GM12878 (cell line): ENCODE measurements at regions of chr17 and their contacts with region 1.

Region 1: GRCh38 chr17:67456103-67456502 is 79.0 kb downstream of the PITPNC1 start:
- DNase-seq: no peak
- ATAC-seq: peak; percentile 63
- H3K4me3 ChIP-seq: peak overlapping the region; percentile 4; the same call in 1 of the 2 replicates
- H3K27ac ChIP-seq: peak overlapping the region; percentile 35; the same call in 1 of the 2 replicates
- H3K4me1 ChIP-seq: peaks cover 34% of the 10 kb centered on the region
- H3K27me3 ChIP-seq: no peaks in the 10 kb centered on the region
- CTCF ChIP-seq: no peak
- EP300 ChIP-seq: no peak
- POLR2A ChIP-seq: no peak
- RAD21 ChIP-seq: no peak

Region 2: GRCh38 chr17:66567234-66568170 is 888.6 kb before region 1 on chr17:
- CTCF ChIA-PET with region 1: no interaction called
- POLR2A ChIA-PET with region 1: no interaction called
- RAD21 ChIA-PET with region 1: no interaction called
- SMC1A ChIA-PET with region 1: no interaction called
- in situ Hi-C with region 1: no loop called
- intact Hi-C with region 1: no loop called
- DNase-seq: peak; percentile 23
- ATAC-seq: peak; percentile 98
- H3K4me3 ChIP-seq: no peak overlapping the region
- H3K27ac ChIP-seq: no peak overlapping the region
- H3K4me1 ChIP-seq: no peaks in the 10 kb centered on the region
- H3K27me3 ChIP-seq: no peaks in the 10 kb centered on the region
- CTCF ChIP-seq: peak; percentile 87
- EP300 ChIP-seq: no peak
- POLR2A ChIP-seq: no peak
- RAD21 ChIP-seq: peak; percentile 93

Region 3: DNA sequence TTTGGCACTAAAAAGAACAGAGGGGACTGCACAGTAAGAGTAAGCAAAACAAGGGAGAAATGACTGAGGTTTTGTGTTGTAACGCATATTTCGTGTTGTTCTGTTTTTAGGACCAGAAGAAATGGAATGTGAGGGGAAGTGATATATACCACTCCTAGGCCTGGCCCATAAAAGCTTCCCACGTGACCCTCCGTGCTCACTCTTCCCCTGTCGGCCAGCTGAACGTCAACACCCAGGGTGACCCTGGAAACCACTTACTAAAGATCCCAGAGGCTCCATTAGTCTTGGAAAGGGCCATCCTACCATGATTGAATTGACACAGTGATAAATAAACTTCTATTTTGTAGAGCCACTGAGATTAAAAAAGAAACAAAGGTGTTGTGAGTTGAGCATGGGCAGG is 290.9 kb before region 1 on chr17:
- CTCF ChIA-PET with region 1: no interaction called
- POLR2A ChIA-PET with region 1: no interaction called
- RAD21 ChIA-PET with region 1: no interaction called
- SMC1A ChIA-PET with region 1: no interaction called
- in situ Hi-C with region 1: no loop called
- intact Hi-C with region 1: no loop called
- DNase-seq: no peak
- ATAC-seq: no peak
- H3K4me3 ChIP-seq: no peak overlapping the region
- H3K27ac ChIP-seq: no peak overlapping the region
- H3K4me1 ChIP-seq: no peaks in the 10 kb centered on the region
- H3K27me3 ChIP-seq: no peaks in the 10 kb centered on the region
- CTCF ChIP-seq: no peak
- EP300 ChIP-seq: no peak
- POLR2A ChIP-seq: no peak
- RAD21 ChIP-seq: no peak

Region 4: GRCh38 chr17:67262435-67263117 is 193.5 kb before region 1 on chr17:
- CTCF ChIA-PET with region 1: no interaction called
- POLR2A ChIA-PET with region 1: no interaction called
- RAD21 ChIA-PET with region 1: no interaction called
- SMC1A ChIA-PET with region 1: no interaction called
- in situ Hi-C with region 1: no loop called
- intact Hi-C with region 1: no loop called
- DNase-seq: no peak
- ATAC-seq: no peak
- H3K4me3 ChIP-seq: no peak overlapping the region
- H3K27ac ChIP-seq: no peak overlapping the region
- H3K4me1 ChIP-seq: no peaks in the 10 kb centered on the region; the same call in 1 of the 2 replicates
- H3K27me3 ChIP-seq: no peaks in the 10 kb centered on the region
- CTCF ChIP-seq: no peak
- EP300 ChIP-seq: no peak
- POLR2A ChIP-seq: no peak
- RAD21 ChIP-seq: no peak

Region 5: DNA sequence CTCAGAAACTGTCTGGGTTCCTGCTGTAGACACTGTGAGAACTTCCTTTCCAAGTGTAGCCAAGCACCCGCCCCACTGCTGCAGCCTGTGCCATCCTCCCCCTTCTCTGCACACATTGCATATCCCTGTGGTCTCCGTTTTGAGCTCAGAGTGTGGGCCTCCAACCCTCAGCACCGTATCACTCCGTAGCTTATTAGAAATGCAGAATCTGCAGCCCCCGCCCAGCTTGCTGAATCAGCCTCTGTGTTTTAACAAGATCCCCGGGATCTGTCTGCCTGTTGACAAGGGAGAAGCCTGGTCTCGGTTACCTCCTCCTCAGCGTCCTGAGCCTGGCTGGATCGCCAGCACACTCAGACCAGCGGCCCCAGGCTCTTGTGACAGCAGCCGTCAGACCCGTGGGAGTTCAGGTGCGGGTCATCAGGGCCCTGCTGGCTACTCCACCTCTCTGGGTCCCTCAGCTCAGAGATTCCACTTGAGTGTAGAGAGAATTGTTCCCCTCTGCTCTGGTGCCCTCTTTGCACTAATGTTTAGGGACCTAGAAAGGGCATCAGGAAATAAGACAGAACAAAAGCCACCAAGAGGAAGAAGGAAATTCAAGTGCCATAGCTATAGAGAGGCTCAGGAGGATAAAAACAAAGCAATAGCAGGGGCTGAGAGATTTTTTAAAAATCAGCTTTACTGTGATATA is 13.2 kb after region 1 on chr17:
- CTCF ChIA-PET with region 1: interaction called, 13 read pairs
- POLR2A ChIA-PET with region 1: interaction called, 5 read pairs
- RAD21 ChIA-PET with region 1: interaction called, 4 read pairs
- SMC1A ChIA-PET with region 1: interaction called, 12 read pairs
- in situ Hi-C with region 1: no loop called
- intact Hi-C with region 1: no loop called
- DNase-seq: no peak
- ATAC-seq: no peak
- H3K4me3 ChIP-seq: no peak overlapping the region
- H3K27ac ChIP-seq: no peak overlapping the region
- H3K4me1 ChIP-seq: peaks cover 26% of the 10 kb centered on the region
- H3K27me3 ChIP-seq: no peaks in the 10 kb centered on the region
- CTCF ChIP-seq: no peak
- EP300 ChIP-seq: no peak
- POLR2A ChIP-seq: no peak
- RAD21 ChIP-seq: no peak